ENCODE measurements at regions of chr17 and their contacts with region 1.

Region 1: GRCh38 chr17:79393358-79394202 is 217.3 kb downstream of the RBFOX3 start:
- DNase-seq: peak; percentile 63
- H3K4me3 ChIP-seq: no peak overlapping the region
- H3K27ac ChIP-seq: no peak overlapping the region
- H3K4me1 ChIP-seq: no peaks in the 10 kb centered on the region
- H3K27me3 ChIP-seq: no peaks in the 10 kb centered on the region
- CTCF ChIP-seq: peak; percentile 94 to 99
- POLR2A ChIP-seq: no peak

Region 2: DNA sequence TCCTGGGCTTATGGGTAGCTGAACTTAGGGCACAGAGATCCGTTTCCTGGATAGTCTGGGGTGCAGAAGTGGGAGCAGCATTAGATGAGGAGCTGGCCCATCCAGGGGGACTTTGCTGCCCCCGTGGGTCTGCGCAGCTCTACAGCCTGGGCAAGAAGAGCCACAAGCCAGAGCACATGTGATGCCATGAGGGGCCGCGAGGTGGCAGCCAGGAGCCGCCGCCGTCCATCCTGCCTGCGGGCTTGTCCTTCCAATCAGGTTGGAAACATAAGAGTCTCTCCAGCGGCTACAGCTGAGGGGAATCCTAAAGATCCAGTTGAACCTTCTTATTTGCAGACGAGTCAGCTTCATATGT is 347.8 kb before region 1 on chr17:
- CTCF ChIA-PET with region 1: interaction called, 109 read pairs
- POLR2A ChIA-PET with region 1: no interaction called
- dilution Hi-C with region 1: no loop called
- intact Hi-C with region 1: loop called (anchors 1 kb)
- DNase-seq: peak; percentile 79
- H3K4me3 ChIP-seq: no peak overlapping the region
- H3K27ac ChIP-seq: no peak overlapping the region
- H3K4me1 ChIP-seq: no peaks in the 10 kb centered on the region
- H3K27me3 ChIP-seq: no peaks in the 10 kb centered on the region
- CTCF ChIP-seq: peak; percentile 90 to 96
- POLR2A ChIP-seq: no peak

Region 3: GRCh38 chr17:79074650-79075445 is 318.7 kb before region 1 on chr17 and contains the start of gene ENGASE:
- CTCF ChIA-PET with region 1: interaction called, 428 read pairs
- POLR2A ChIA-PET with region 1: no interaction called
- dilution Hi-C with region 1: no loop called
- intact Hi-C with region 1: no loop called
- DNase-seq: peak; percentile 90
- H3K4me3 ChIP-seq: peak within 1 kb of the TSS; percentile 48 to 76 (median 71)
- H3K27ac ChIP-seq: no peak within 1 kb of the TSS
- H3K4me1 ChIP-seq: peaks cover 8% of the 10 kb centered on the region
- H3K27me3 ChIP-seq: peaks cover 2 to 4% of the 10 kb centered on the region in 2 experiments
- CTCF ChIP-seq: no peak
- POLR2A ChIP-seq: peak; percentile 38
- total RNA-seq, gene ENGASE: 20.8 and 27.2 TPM in 2 replicates

Region 4: GRCh38 chr17:79095345-79096055 is 298.1 kb before region 1 on chr17:
- CTCF ChIA-PET with region 1: interaction called, 428 read pairs
- POLR2A ChIA-PET with region 1: no interaction called
- dilution Hi-C with region 1: no loop called
- intact Hi-C with region 1: no loop called
- DNase-seq: no peak
- H3K4me3 ChIP-seq: no peak overlapping the region
- H3K27ac ChIP-seq: no peak overlapping the region
- H3K4me1 ChIP-seq: no peaks in the 10 kb centered on the region
- H3K27me3 ChIP-seq: peaks cover 9 to 10% of the 10 kb centered on the region in 2 experiments
- CTCF ChIP-seq: no peak
- POLR2A ChIP-seq: no peak

Region 5: DNA sequence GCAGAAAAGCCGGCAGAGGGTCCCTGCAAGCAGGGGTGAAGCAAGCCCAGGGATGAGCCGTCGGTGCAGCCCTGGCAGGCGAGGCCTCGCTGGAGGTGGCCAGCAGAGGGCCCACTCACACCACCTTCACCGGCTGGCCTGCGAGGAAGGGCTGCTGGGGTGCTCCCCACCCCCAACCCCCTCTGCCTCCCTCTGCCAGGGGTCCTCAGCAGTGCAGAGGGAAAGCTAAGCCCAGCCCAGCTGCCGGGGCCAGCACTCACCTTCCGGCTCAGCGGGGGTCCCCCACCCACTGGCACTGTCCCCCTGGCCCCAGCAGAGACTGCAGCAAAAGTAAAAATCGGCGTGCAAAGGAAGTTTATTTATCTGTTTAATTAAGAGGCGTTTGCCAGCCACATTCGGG is 205.5 kb before region 1 on chr17:
- CTCF ChIA-PET with region 1: interaction called, 108 read pairs
- POLR2A ChIA-PET with region 1: no interaction called
- dilution Hi-C with region 1: no loop called
- intact Hi-C with region 1: loop called (anchors 2 kb)
- DNase-seq: no peak
- H3K4me3 ChIP-seq: no peak overlapping the region
- H3K27ac ChIP-seq: no peak overlapping the region
- H3K4me1 ChIP-seq: no peaks in the 10 kb centered on the region
- H3K27me3 ChIP-seq: peaks cover 9 to 23% of the 10 kb centered on the region in 2 experiments
- CTCF ChIP-seq: peak; percentile 22 to 71
- POLR2A ChIP-seq: no peak

Region 6: DNA sequence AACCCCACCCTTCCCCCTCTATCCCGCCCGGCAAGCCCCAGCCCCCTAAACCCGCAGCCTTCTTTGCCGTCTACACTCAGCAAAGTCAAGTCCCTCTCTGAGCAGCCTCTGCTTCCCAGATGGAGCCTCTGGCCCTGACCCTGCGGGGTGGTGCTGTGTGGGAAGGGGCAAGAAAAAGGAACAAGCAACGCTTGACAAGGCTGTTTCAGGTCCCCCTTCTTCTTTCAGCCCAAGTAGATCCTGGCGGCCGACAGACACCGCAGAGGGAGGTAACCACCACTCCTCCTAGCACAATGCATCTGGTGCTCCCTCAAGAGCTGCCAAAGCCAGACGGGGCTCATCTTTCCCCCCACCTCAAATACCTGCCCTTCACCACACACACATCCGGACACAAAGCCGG is 140.7 kb before region 1 on chr17:
- CTCF ChIA-PET with region 1: no interaction called
- POLR2A ChIA-PET with region 1: no interaction called
- dilution Hi-C with region 1: no loop called
- intact Hi-C with region 1: no loop called
- DNase-seq: no peak
- H3K4me3 ChIP-seq: no peak overlapping the region
- H3K27ac ChIP-seq: no peak overlapping the region
- H3K4me1 ChIP-seq: no peaks in the 10 kb centered on the region
- H3K27me3 ChIP-seq: no peaks in the 10 kb centered on the region
- CTCF ChIP-seq: no peak
- POLR2A ChIP-seq: no peak

Region 7: DNA sequence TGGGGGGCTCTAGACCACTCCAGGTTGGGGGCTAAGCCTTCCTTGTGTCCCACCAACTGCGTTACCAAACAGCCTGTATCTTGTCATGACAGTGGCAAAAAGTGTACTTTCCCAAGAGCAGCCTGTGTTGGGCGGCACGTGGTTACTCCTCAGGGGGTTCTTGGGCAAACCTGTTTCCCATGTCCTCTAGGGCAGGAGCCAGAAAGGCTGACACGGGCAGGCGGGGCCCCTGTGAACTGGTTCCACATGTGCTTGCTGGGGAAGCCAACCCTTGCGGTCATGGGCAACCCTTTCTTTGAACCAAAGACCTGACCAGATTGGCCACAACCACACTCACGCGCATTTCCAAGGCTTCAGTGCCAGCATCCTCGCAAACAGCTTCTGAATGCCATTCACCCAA is 11.3 kb before region 1 on chr17:
- CTCF ChIA-PET with region 1: interaction called, 18 read pairs
- POLR2A ChIA-PET with region 1: interaction called, 3 read pairs
- dilution Hi-C with region 1: no loop called
- intact Hi-C with region 1: no loop called
- DNase-seq: no peak
- H3K4me3 ChIP-seq: no peak overlapping the region
- H3K27ac ChIP-seq: no peak overlapping the region
- H3K4me1 ChIP-seq: no peaks in the 10 kb centered on the region
- H3K27me3 ChIP-seq: no peaks in the 10 kb centered on the region
- CTCF ChIP-seq: no peak
- POLR2A ChIP-seq: no peak

Measured in endothelial cell of umbilical vein (primary cell).